SK-N-SH (cell line): ENCODE measurements at regions of chr4 and their contacts with region 1.

Region 1: DNA sequence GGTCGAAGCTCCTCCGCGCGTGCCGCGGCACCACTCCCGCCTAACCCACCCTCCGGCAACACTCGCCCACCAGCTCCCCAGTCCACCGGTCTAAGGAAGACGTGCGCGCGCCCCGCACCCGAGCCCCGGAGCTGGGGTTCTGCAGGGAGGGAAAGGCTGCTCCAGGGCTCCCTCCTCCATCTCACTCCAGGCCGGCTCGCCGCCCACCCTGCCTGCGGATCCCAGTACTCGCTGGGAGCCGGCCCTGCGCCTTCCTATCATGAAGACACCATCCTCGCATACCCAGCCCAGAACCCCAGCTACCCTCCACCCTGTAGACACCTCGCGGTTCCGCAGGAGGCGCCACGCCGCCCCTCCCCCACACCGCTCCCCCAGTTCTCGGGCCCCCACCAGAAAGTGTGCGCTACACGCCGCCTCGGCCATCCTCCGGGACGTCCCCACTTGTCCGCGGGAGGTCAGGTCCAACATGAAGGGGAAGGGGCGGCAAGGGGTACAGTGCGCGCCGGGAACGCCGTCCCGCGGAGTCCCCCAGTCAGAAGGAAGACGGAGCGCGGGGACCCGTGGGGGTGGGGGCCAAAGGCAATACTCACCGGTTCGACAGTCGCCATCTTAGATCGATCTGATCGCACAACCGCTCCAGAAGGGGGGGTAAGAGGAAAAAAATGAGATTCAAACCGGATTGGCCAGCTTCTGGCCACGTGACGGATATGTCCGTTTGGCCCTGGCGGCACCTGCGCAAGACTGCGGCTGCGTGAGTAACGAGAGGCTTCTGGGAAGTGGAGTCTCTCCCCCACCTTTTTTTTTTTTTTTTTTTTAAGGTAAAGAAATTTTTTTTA is at the start of gene EIF4E:
- DNase-seq: peak; percentile 92
- H3K4me3 ChIP-seq: peak within 1 kb of the TSS; percentile 79 to 93
- H3K27ac ChIP-seq: peak within 1 kb of the TSS; percentile 95 to 98
- H3K4me1 ChIP-seq: peaks cover 0 to 7% of the 10 kb centered on the region in 2 experiments; a peak in 2 of 4 replicates
- H3K27me3 ChIP-seq: no peaks in the 10 kb centered on the region
- CTCF ChIP-seq: peak; percentile 34
- EP300 ChIP-seq: peak; percentile 5 to 7; a peak in 1 of 4 replicates
- RAD21 ChIP-seq: no peak
- polyA plus RNA-seq, gene EIF4E: 59.8 and 67.6 TPM in 2 replicates

Region 2: GRCh38 chr4:98816815-98817214 is 111.9 kb before region 1 on chr4:
- CTCF ChIA-PET with region 1: no interaction called
- POLR2A ChIA-PET with region 1: no interaction called
- DNase-seq: no peak
- H3K4me3 ChIP-seq: no peak overlapping the region
- H3K27ac ChIP-seq: no peak overlapping the region
- H3K4me1 ChIP-seq: no peaks in the 10 kb centered on the region
- H3K27me3 ChIP-seq: no peaks in the 10 kb centered on the region
- CTCF ChIP-seq: no peak
- EP300 ChIP-seq: no peak
- RAD21 ChIP-seq: no peak

Region 3: GRCh38 chr4:98903963-98904362 is 24.8 kb before region 1 on chr4:
- CTCF ChIA-PET with region 1: no interaction called
- POLR2A ChIA-PET with region 1: no interaction called
- DNase-seq: no peak
- H3K4me3 ChIP-seq: no peak overlapping the region
- H3K27ac ChIP-seq: no peak overlapping the region
- H3K4me1 ChIP-seq: peaks cover 0 to 12% of the 10 kb centered on the region in 2 experiments; a peak in 1 of 4 replicates
- H3K27me3 ChIP-seq: no peaks in the 10 kb centered on the region
- CTCF ChIP-seq: no peak
- EP300 ChIP-seq: no peak
- RAD21 ChIP-seq: no peak

Region 4: GRCh38 chr4:99088481-99089365 is 160.0 kb after region 1 on chr4 and contains the start of gene ADH5:
- CTCF ChIA-PET with region 1: no interaction called
- POLR2A ChIA-PET with region 1: interaction called, 11 read pairs
- DNase-seq: peak; percentile 95
- H3K4me3 ChIP-seq: peak within 1 kb of the TSS; percentile 68 to 83
- H3K27ac ChIP-seq: peak within 1 kb of the TSS; percentile 77 to 94
- H3K4me1 ChIP-seq: peaks cover 0 to 3% of the 10 kb centered on the region in 2 experiments; a peak in 2 of 4 replicates
- H3K27me3 ChIP-seq: no peaks in the 10 kb centered on the region
- CTCF ChIP-seq: no peak
- EP300 ChIP-seq: no peak
- RAD21 ChIP-seq: no peak
- polyA plus RNA-seq, gene ADH5: 111 and 159 TPM in 2 replicates

Region 5: GRCh38 chr4:99310389-99310788 is 381.7 kb after region 1 on chr4:
- CTCF ChIA-PET with region 1: no interaction called
- POLR2A ChIA-PET with region 1: no interaction called
- DNase-seq: no peak
- H3K4me3 ChIP-seq: no peak overlapping the region
- H3K27ac ChIP-seq: no peak overlapping the region
- H3K4me1 ChIP-seq: no peaks in the 10 kb centered on the region
- H3K27me3 ChIP-seq: no peaks in the 10 kb centered on the region
- CTCF ChIP-seq: no peak
- EP300 ChIP-seq: no peak
- RAD21 ChIP-seq: no peak